B cell (primary cell): ENCODE measurements at regions of chr15 and their contacts with region 1.

Region 1: GRCh38 chr15:76931397-76932007 is at the start of gene RCN2:
- DNase-seq: peak; percentile 95
- ATAC-seq: peak; percentile 97
- H3K4me3 ChIP-seq: peak within 1 kb of the TSS; percentile 54 to 84 (median 61)
- H3K4me3 Mint-ChIP-seq: peak within 1 kb of the TSS; percentile 90
- H3K27ac ChIP-seq: peak within 1 kb of the TSS; percentile 71 to 80
- H3K27ac Mint-ChIP-seq: peak within 1 kb of the TSS; percentile 96
- H3K4me1 ChIP-seq: peaks cover 26 to 40% of the 10 kb centered on the region in 2 donors
- H3K4me1 Mint-ChIP-seq: peaks cover 35% of the 10 kb centered on the region
- H3K27me3 ChIP-seq: no peaks in the 10 kb centered on the region
- H3K27me3 Mint-ChIP-seq: no peaks in the 10 kb centered on the region
- CTCF ChIP-seq: no peak
- total RNA-seq, gene RCN2: 27.8 and 29.5 TPM in 2 replicates

Region 2: GRCh38 chr15:76905013-76905839 is 26.3 kb before region 1 on chr15 and contains the start of gene SCAPER:
- CTCF ChIA-PET with region 1: interaction called, 4 read pairs
- POLR2A ChIA-PET with region 1: interaction called, 4 read pairs
- intact Hi-C with region 1: loop called (anchors 1 kb)
- DNase-seq: peak; percentile 94
- ATAC-seq: peak; percentile 88
- H3K4me3 ChIP-seq: peak within 1 kb of the TSS; percentile 76 to 93 (median 80)
- H3K4me3 Mint-ChIP-seq: peak within 1 kb of the TSS; percentile 91
- H3K27ac ChIP-seq: peak within 1 kb of the TSS; percentile 82 to 92
- H3K27ac Mint-ChIP-seq: peak within 1 kb of the TSS; percentile 89
- H3K4me1 ChIP-seq: peaks cover 32 to 36% of the 10 kb centered on the region in 2 donors
- H3K4me1 Mint-ChIP-seq: peaks cover 52% of the 10 kb centered on the region
- H3K27me3 ChIP-seq: no peaks in the 10 kb centered on the region
- H3K27me3 Mint-ChIP-seq: no peaks in the 10 kb centered on the region
- CTCF ChIP-seq: no peak
- total RNA-seq, gene SCAPER: 59.5 and 61.6 TPM in 2 replicates

Region 3: DNA sequence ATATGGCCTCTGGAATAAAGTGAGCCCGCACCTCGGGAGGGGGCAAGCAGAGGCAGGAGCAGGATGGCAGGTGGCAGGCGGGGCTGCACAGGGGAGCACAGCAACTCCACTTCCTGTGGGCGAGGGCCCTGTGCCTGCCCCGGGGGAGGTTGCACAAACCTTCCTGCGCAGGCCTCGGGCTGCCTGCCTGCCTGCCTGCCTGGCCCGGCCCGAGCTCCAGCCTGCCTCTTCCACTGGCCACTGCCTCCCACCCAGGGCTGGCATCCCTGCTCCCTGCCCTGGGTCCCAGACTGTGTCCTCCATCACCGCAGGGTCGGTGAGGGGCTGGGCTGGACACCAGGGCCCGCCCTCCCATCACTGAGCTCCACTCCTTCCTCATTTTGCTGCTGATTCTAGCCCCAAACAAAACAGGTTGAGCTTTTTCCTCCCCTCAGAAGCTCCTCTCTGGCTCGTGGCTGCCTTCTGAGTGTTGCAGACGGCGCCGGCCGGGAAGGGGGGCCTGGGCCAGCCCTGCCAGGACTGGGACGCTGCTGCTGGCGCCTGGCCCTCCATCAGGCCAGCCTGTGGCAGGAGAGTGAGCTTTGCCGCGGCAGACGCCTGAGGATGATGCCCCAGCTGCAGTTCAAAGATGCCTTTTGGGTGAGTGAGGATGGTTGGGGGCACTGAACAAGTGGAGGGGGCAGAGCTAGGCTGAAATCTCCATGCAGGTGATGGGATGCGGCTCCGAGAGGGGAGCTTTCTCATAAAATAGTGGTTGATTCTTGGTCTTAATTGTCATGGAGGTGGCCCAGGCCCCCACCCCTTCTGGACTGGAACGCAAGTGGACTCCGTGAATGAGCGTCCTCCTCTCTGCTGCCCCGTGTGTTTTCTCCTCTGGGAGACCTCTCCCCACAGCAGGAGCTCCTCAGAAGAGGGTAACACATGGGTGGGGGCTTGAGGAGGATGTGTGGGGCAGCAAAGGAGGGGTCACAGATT is 63.8 kb after region 1 on chr15 and contains the start of gene PSTPIP1:
- CTCF ChIA-PET with region 1: interaction called, 8 read pairs
- POLR2A ChIA-PET with region 1: interaction called, 5 read pairs
- intact Hi-C with region 1: loop called (anchors 1 kb)
- DNase-seq: peak; percentile 80
- ATAC-seq: peak; percentile 89
- H3K4me3 ChIP-seq: peak within 1 kb of the TSS; percentile 74 to 86 (median 79)
- H3K4me3 Mint-ChIP-seq: peak within 1 kb of the TSS; percentile 99
- H3K27ac ChIP-seq: peak within 1 kb of the TSS; percentile 79 to 81
- H3K27ac Mint-ChIP-seq: peak within 1 kb of the TSS; percentile 100
- H3K4me1 ChIP-seq: peaks cover 38 to 57% of the 10 kb centered on the region in 2 donors
- H3K4me1 Mint-ChIP-seq: peaks cover 51% of the 10 kb centered on the region
- H3K27me3 ChIP-seq: no peaks in the 10 kb centered on the region
- H3K27me3 Mint-ChIP-seq: no peaks in the 10 kb centered on the region
- CTCF ChIP-seq: no peak
- total RNA-seq, gene PSTPIP1: 67.1 and 69.0 TPM in 2 replicates

Region 4: GRCh38 chr15:77181305-77182074 is 250.0 kb after region 1 on chr15:
- CTCF ChIA-PET with region 1: no interaction called
- POLR2A ChIA-PET with region 1: no interaction called
- intact Hi-C with region 1: loop called (anchors 5 kb)
- DNase-seq: peak; percentile 69
- ATAC-seq: peak; percentile 70
- H3K4me3 ChIP-seq: peak overlapping the region in 4 of 5 experiments; percentile 35 to 50 (median 41)
- H3K4me3 Mint-ChIP-seq: peak overlapping the region; percentile 75
- H3K27ac ChIP-seq: peak overlapping the region; percentile 76 to 84
- H3K27ac Mint-ChIP-seq: peak overlapping the region; percentile 88
- H3K4me1 ChIP-seq: peaks cover 74 to 81% of the 10 kb centered on the region in 2 donors
- H3K4me1 Mint-ChIP-seq: peaks cover 72% of the 10 kb centered on the region
- H3K27me3 ChIP-seq: no peaks in the 10 kb centered on the region
- H3K27me3 Mint-ChIP-seq: no peaks in the 10 kb centered on the region
- CTCF ChIP-seq: no peak